Lower leg skin (tissue), 4 donors: ENCODE measurements at regions of chr7 and their contacts with region 1.

Region 1: GRCh38 chr7:116316833-116317612 is 106.7 kb downstream of the TES start:
- DNase-seq: peak in 1 of 2 donors; percentile 86
- H3K4me3 ChIP-seq: no peak overlapping the region
- CTCF ChIP-seq: no peak
- POLR2A ChIP-seq: no peak

Region 2: DNA sequence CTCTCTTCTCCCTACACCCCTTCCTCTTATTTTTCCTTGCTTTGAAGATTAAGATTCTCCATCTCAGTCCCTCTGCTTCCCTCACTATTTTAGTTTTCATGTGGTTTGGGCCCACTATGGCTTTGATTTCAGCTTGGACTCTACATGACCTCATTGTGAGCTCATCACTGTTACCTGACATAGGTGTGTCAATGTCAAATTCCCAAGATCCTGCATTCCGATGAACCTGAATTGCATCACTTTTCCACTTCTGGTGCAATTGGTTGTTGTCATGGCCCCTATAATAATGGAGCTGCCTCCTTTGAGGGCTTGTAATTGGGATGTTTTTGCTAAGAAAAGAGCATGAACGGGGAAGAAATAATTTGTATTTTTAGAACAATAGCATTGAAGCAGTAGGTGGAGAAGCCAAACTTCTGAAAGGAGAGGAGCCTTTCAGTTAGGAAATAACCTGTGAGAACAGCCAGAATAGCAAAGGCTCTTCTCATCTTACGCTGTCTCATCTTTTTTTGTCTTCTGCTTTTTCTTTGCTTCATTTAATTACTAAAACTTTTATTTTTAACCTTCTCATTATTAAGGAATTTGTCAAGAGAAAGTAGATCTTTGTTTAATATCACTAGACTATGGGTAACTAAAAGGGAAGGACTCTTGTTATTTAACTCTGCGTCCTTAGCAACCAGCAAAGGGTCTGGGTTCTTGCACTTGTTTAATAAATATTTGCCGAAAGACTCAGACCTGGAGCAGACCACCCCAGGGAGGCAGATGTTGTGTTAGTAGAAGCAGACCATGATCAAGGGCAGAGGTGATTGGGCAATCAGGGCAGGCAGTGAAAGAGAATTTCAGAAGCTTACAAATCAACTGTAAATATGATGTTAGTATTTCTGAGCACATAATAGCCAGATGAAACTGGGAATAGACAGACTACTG is 11.3 kb before region 1 on chr7:
- intact Hi-C with region 1: no loop called
- DNase-seq: no peak
- H3K4me3 ChIP-seq: no peak overlapping the region
- CTCF ChIP-seq: no peak
- POLR2A ChIP-seq: no peak

Region 3: GRCh38 chr7:116339564-116339963 is 22.5 kb after region 1 on chr7:
- intact Hi-C with region 1: loop called (anchors 2 kb)
- DNase-seq: no peak
- H3K4me3 ChIP-seq: no peak overlapping the region
- CTCF ChIP-seq: no peak
- POLR2A ChIP-seq: no peak

Region 4: GRCh38 chr7:116395125-116395791 is 78.2 kb after region 1 on chr7:
- intact Hi-C with region 1: no loop called
- DNase-seq: no peak
- H3K4me3 ChIP-seq: no peak overlapping the region
- CTCF ChIP-seq: no peak
- POLR2A ChIP-seq: no peak